ENCODE measurements at regions of chr17 and their contacts with region 1.

Region 1: DNA sequence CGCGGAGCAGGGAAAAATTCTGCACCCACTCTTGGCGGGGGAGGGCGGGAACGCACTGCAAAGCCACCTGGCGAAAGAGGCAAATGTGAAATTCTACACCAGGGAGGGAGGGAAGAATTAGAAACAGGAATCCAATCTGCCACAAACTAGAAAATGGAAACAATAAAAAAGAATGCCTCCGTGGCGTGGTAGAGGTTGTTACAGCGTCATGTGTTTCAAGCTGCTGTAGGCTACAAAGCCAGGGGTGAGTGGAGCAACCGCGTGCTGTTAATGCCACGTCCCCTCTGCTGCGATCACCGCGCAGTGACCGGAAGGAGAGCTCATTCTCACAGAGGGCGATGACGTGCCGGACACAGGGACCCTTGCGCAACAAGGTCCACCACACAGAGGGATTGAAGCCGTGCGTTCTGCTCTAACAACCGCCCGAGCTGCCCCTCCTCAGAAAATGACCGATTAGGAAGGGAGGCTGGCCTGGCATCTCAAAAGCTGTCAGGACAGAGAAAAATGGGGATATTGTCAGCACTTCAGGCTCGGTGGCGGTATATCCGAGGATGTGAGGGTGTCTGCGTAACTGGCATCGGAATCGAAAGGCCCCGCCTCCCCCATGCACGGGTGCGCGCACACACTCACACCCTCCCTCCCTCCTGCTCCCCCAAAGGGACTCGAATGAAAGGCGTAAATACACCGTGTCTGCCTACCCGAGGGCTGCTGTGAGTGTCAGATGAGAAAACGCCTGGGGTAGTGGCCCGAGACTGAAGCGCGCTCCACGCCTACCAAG is 70.8 kb upstream of the TNRC6C start:
- DNase-seq: peak; percentile 68 to 94 (median 80)
- ATAC-seq: peak; percentile 93
- H3K4me3 ChIP-seq: peak overlapping the region; percentile 67
- H3K4me3 Mint-ChIP-seq: peak overlapping the region; percentile 95
- H3K27ac ChIP-seq: peak overlapping the region; percentile 89 to 93
- H3K27ac Mint-ChIP-seq: peak overlapping the region; percentile 99
- H3K4me1 ChIP-seq: peaks cover 57% of the 10 kb centered on the region
- H3K4me1 Mint-ChIP-seq: peaks cover 53% of the 10 kb centered on the region
- H3K27me3 ChIP-seq: no peaks in the 10 kb centered on the region
- H3K27me3 Mint-ChIP-seq: no peaks in the 10 kb centered on the region
- CTCF ChIP-seq: no peak

Region 2: DNA sequence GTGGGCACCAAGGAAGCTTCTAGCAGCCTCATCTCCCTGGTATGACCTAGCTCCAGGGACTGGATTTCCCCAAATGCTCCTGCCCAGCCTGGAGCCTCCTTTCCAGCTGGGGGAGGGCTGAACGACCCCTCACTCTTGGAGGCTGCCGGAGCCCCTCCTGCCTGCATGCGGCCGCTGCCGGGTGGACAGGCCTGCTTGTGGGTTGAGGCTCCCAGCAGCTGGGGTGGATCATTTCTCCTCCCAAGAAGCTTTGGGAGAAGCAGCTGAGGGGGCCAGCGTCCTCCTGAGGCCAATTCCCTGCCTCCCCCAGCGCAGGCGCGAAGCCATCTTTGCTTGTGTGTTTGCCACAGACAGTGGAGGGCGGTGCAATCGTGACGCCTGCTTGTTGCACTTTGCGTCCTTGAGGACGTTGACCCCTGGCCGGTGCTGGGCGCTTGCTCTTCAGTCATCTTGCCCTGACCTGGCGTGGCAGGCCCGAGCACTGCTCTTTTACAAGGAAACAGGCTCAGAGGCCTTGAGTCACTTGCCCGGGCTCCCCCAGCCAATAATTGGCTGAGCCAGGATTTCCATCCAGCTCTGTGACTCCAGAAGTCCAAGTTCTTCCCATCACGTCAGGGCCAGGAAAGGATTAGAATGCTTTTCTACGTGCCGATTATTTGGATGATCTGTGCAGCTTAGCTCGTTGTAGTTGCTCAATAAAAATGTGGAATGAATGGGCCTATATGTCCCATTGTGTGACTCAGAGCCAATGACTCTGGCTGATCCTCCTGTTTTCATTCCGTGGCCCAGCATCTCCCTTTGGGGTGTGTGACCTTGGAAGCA is 533.0 kb before region 1 on chr17:
- CTCF ChIA-PET with region 1: no interaction called
- POLR2A ChIA-PET with region 1: no interaction called
- intact Hi-C with region 1: loop called in 1 of 2 experiments (anchors 5 kb)
- DNase-seq: peak in 1 of 14 experiments; percentile 21
- ATAC-seq: no peak
- H3K4me3 ChIP-seq: no peak overlapping the region
- H3K4me3 Mint-ChIP-seq: no peak overlapping the region
- H3K27ac ChIP-seq: no peak overlapping the region
- H3K27ac Mint-ChIP-seq: no peak overlapping the region
- H3K4me1 ChIP-seq: peaks cover 38% of the 10 kb centered on the region
- H3K4me1 Mint-ChIP-seq: peaks cover 43% of the 10 kb centered on the region
- H3K27me3 ChIP-seq: no peaks in the 10 kb centered on the region
- H3K27me3 Mint-ChIP-seq: no peaks in the 10 kb centered on the region
- CTCF ChIP-seq: no peak

Region 3: GRCh38 chr17:77783991-77784820 is 103.4 kb before region 1 on chr17:
- CTCF ChIA-PET with region 1: no interaction called
- POLR2A ChIA-PET with region 1: interaction called, 13 read pairs
- intact Hi-C with region 1: loop called in 1 of 2 experiments (anchors 1 kb)
- DNase-seq: peak; percentile 51 to 92 (median 64)
- ATAC-seq: peak; percentile 93
- H3K4me3 ChIP-seq: peak overlapping the region; percentile 16
- H3K4me3 Mint-ChIP-seq: peak overlapping the region; percentile 2
- H3K27ac ChIP-seq: peak overlapping the region; percentile 64 to 77
- H3K27ac Mint-ChIP-seq: peak overlapping the region; percentile 96
- H3K4me1 ChIP-seq: peaks cover 28% of the 10 kb centered on the region
- H3K4me1 Mint-ChIP-seq: peaks cover 14% of the 10 kb centered on the region
- H3K27me3 ChIP-seq: no peaks in the 10 kb centered on the region
- H3K27me3 Mint-ChIP-seq: no peaks in the 10 kb centered on the region
- CTCF ChIP-seq: no peak